Activated naive CD4-positive, alpha-beta T cell treated with anti-CD3 and anti-CD28 coated beads for 36 hours (primary cell): ENCODE measurements at regions of chr7 and their contacts with region 1.

Region 1: DNA sequence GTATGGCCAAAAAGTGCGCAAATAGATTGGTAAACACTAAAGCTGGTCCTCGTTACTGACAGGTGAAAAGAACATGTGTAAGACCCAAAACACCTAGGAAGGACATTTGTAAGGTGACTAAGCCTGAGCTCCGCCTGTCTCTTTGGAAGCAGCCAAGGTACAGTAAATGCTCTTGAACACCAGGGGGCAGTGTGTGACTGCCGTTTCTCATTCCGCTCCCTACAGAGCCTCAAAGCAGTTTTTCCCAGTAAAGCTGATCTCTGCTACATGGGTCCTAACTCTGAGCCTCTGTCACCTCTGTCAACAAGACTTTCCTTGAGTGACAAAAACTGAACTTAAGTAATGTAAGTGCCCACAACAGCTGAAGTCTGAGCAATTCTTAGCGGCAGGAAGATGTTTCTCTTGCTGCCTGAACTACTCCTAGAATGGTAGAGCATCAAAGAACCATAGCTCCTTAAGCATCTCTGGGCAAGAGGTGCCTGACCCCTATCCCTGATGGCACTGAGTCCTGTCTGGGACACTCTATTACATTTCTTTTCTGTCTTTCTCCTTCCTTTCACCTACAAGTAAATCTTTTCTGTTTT is 238.0 kb upstream of the INHBA start:
- DNase-seq: peak; percentile 70
- H3K4me3 Mint-ChIP-seq: no peak overlapping the region
- H3K27ac Mint-ChIP-seq: no peak overlapping the region
- H3K4me1 Mint-ChIP-seq: peaks cover 6% of the 10 kb centered on the region
- H3K27me3 Mint-ChIP-seq: peaks cover 24% of the 10 kb centered on the region

Region 2: GRCh38 chr7:41921453-41921981 is 19.3 kb before region 1 on chr7:
- CTCF ChIA-PET with region 1: interaction called, 13 read pairs
- intact Hi-C with region 1: no loop called
- DNase-seq: no peak
- H3K4me3 Mint-ChIP-seq: no peak overlapping the region
- H3K27ac Mint-ChIP-seq: no peak overlapping the region
- H3K4me1 Mint-ChIP-seq: no peaks in the 10 kb centered on the region
- H3K27me3 Mint-ChIP-seq: peaks cover 20% of the 10 kb centered on the region

Region 3: GRCh38 chr7:41977151-41977651 is 36.3 kb after region 1 on chr7:
- CTCF ChIA-PET with region 1: interaction called, 21 read pairs
- intact Hi-C with region 1: no loop called
- DNase-seq: peak; percentile 15
- H3K4me3 Mint-ChIP-seq: no peak overlapping the region
- H3K27ac Mint-ChIP-seq: no peak overlapping the region
- H3K4me1 Mint-ChIP-seq: no peaks in the 10 kb centered on the region
- H3K27me3 Mint-ChIP-seq: peaks cover 9% of the 10 kb centered on the region

Region 4: GRCh38 chr7:42876182-42877068 is 935.6 kb after region 1 on chr7:
- CTCF ChIA-PET with region 1: interaction called, 10 read pairs
- intact Hi-C with region 1: loop called (anchors 1 kb)
- DNase-seq: peak; percentile 82
- H3K4me3 Mint-ChIP-seq: no peak overlapping the region
- H3K27ac Mint-ChIP-seq: no peak overlapping the region
- H3K4me1 Mint-ChIP-seq: no peaks in the 10 kb centered on the region
- H3K27me3 Mint-ChIP-seq: no peaks in the 10 kb centered on the region

Region 5: DNA sequence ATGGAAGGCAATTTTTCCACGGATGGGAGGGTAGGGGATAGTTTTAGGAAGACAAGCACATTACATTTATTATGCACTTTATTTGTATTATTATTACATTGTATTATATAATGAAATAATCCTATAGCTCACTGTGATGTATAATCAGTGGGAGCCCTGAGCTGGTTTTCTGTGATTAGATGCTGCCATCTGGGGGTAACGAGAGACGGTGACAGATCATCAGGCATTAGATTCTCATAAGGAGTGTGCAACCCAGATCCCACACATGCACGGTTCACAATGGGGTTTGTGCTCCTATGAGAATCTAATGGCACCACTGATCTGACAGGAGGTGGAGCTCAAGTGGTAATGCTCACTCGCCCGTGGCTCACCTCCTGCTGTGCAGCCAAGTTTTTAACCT is 1538.2 kb after region 1 on chr7:
- CTCF ChIA-PET with region 1: no interaction called
- intact Hi-C with region 1: loop called (anchors 5 kb)
- DNase-seq: peak; percentile 10
- H3K4me3 Mint-ChIP-seq: no peak overlapping the region
- H3K27ac Mint-ChIP-seq: no peak overlapping the region
- H3K4me1 Mint-ChIP-seq: no peaks in the 10 kb centered on the region
- H3K27me3 Mint-ChIP-seq: no peaks in the 10 kb centered on the region